AG04450 (cell line): ENCODE measurements at regions of chr4 and their contacts with region 1.

Region 1: DNA sequence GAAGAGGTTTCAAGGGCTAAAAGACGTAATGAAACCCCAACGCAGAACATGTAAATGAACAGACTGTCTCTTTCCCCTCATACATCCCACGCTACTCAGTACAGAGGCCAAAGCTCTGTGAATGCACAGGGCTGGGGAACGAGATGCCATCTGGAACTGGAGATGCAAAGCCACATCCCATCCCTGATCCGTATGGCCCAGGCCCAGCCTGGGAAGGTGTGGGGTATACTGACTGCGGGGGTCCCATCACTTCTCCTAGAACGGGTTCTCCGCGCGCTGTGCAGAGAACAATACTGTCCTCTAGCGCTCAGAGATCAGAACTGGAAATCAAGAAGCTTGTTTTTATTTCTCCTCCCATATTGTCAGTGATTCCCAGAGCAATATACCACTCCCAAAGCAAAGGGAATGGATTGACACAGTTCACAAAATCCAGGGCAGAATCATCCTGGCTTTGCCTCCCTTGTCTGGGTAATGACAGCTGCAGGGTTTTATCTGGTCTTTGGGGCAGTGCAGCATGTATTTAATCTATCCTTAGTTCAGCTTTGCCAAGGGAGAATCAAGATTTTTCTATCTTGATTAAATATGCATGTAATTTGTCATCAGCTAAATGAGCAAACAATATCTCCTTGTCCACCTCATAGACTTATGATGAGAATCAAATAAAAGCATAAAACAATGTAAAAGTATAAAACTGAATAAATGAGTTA is 47.3 kb upstream of the TLR3 start:
- DNase-seq: no peak
- H3K4me3 ChIP-seq: no peak overlapping the region
- H3K27ac ChIP-seq: no peak overlapping the region
- H3K27me3 ChIP-seq: no peaks in the 10 kb centered on the region
- CTCF ChIP-seq: peak; percentile 86

Region 2: GRCh38 chr4:185634066-185634652 is 387.5 kb before region 1 on chr4:
- CTCF ChIA-PET with region 1: interaction called, 127 read pairs
- POLR2A ChIA-PET with region 1: no interaction called
- DNase-seq: no peak
- H3K4me3 ChIP-seq: no peak overlapping the region
- H3K27ac ChIP-seq: no peak overlapping the region
- H3K27me3 ChIP-seq: peaks cover 8% of the 10 kb centered on the region
- CTCF ChIP-seq: peak; percentile 33; the same call in 1 of the 2 replicates

Region 3: GRCh38 chr4:186002853-186003252 is 18.8 kb before region 1 on chr4:
- CTCF ChIA-PET with region 1: interaction called, 11 read pairs
- POLR2A ChIA-PET with region 1: no interaction called
- DNase-seq: no peak
- H3K4me3 ChIP-seq: no peak overlapping the region
- H3K27ac ChIP-seq: no peak overlapping the region
- H3K27me3 ChIP-seq: no peaks in the 10 kb centered on the region
- CTCF ChIP-seq: no peak